ENCODE measurements at regions of chr7 and their contacts with region 1.

Region 1: GRCh38 chr7:43647673-43648472 is 65.0 kb downstream of the STK17A start:
- DNase-seq: no peak
- H3K4me3 Mint-ChIP-seq: peak overlapping the region; percentile 66
- H3K27ac Mint-ChIP-seq: peak overlapping the region; percentile 98
- H3K4me1 Mint-ChIP-seq: peaks cover 85% of the 10 kb centered on the region
- H3K27me3 Mint-ChIP-seq: no peaks in the 10 kb centered on the region

Region 2: DNA sequence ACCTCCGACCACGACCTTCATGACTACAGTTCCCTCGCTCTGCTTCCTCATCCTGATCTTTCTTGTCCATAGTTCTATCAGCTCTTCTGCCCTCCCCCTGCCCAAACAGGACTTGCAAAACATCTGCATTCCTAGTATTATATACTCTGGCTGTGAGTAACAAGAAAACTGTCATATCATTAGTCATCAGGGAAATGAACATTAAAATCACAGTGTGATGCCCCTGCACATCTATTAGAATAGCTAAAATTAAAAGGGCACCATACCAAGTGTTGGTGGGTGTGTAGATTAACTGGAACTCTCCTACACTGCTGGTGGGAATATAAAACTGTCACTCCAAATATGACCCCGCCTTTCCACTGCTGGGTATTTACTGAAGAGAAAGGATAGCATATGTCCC is 877.8 kb before region 1 on chr7:
- intact Hi-C with region 1: no loop called
- DNase-seq: no peak
- H3K4me3 Mint-ChIP-seq: no peak overlapping the region
- H3K27ac Mint-ChIP-seq: no peak overlapping the region
- H3K4me1 Mint-ChIP-seq: no peaks in the 10 kb centered on the region
- H3K27me3 Mint-ChIP-seq: no peaks in the 10 kb centered on the region

Region 3: GRCh38 chr7:42931834-42932651 is 715.8 kb before region 1 on chr7 and contains the starts of genes MRPL32 and PSMA2:
- intact Hi-C with region 1: loop called (anchors 10 kb)
- DNase-seq: peak; percentile 94
- H3K4me3 Mint-ChIP-seq: peak within 1 kb of the TSS; percentile 100
- H3K27ac Mint-ChIP-seq: peak within 1 kb of the TSS; percentile 99
- H3K4me1 Mint-ChIP-seq: peaks cover 53% of the 10 kb centered on the region
- H3K27me3 Mint-ChIP-seq: no peaks in the 10 kb centered on the region
- total RNA-seq, gene MRPL32: 68.8 and 70.0 TPM in 2 replicates
- total RNA-seq, gene PSMA2: 204 and 218 TPM in 2 replicates

Region 4: GRCh38 chr7:43533801-43534479 is 113.9 kb before region 1 on chr7:
- intact Hi-C with region 1: no loop called
- DNase-seq: no peak
- H3K4me3 Mint-ChIP-seq: no peak overlapping the region
- H3K27ac Mint-ChIP-seq: no peak overlapping the region
- H3K4me1 Mint-ChIP-seq: no peaks in the 10 kb centered on the region
- H3K27me3 Mint-ChIP-seq: peaks cover 15% of the 10 kb centered on the region

Region 5: DNA sequence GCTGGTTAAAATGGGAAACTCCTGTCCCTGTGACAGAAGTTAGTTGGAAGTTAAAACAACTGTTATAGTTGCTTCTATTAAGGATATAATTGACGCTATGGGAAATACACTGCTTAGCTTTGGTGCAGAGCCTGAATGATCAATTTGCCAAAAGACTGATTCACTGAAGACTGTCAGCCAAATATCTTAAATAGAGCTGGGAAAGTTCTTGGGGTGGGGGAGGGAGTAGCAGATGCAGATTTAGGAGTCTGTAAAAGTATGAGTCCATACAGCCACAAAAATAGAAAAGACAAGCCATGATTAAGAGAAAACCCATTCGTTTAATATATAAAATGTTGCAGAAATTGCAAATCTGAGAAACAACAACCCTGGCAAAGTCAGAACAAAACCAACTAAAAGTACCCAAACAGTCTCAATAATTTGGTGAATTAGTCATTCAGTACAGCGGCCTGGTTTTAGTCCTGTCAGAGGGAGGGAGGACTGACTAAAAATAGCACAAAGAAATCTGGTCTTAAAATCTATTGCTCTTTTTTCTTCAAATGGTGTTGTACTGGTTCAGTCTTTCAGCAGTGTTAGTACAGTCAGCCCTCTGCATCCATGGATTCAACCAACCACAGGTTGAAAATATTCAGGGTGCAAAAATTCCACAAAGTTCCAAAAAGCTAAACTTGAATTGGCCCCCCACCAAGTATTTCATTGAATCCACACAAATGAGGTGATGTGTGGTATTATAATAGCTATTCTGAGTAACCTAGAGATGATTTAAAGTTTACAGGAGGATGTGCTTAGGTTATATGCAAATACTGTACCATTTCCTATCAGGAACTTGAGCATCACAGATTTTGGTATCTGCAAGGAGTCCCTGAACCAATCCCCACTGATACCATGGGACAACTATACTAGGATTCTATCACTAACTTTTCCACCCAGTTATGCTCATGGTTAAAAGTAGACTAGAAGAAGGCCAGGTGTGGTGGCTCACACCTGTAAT is 35.0 kb before region 1 on chr7:
- intact Hi-C with region 1: loop called (anchors 1 kb)
- DNase-seq: no peak
- H3K4me3 Mint-ChIP-seq: peak overlapping the region; percentile 1
- H3K27ac Mint-ChIP-seq: peak overlapping the region; percentile 70
- H3K4me1 Mint-ChIP-seq: peaks cover 31% of the 10 kb centered on the region
- H3K27me3 Mint-ChIP-seq: no peaks in the 10 kb centered on the region

Region 6: GRCh38 chr7:43636093-43636492 is 11.8 kb before region 1 on chr7:
- intact Hi-C with region 1: no loop called
- DNase-seq: no peak
- H3K4me3 Mint-ChIP-seq: no peak overlapping the region
- H3K27ac Mint-ChIP-seq: no peak overlapping the region
- H3K4me1 Mint-ChIP-seq: peaks cover 44% of the 10 kb centered on the region
- H3K27me3 Mint-ChIP-seq: no peaks in the 10 kb centered on the region

Region 7: DNA sequence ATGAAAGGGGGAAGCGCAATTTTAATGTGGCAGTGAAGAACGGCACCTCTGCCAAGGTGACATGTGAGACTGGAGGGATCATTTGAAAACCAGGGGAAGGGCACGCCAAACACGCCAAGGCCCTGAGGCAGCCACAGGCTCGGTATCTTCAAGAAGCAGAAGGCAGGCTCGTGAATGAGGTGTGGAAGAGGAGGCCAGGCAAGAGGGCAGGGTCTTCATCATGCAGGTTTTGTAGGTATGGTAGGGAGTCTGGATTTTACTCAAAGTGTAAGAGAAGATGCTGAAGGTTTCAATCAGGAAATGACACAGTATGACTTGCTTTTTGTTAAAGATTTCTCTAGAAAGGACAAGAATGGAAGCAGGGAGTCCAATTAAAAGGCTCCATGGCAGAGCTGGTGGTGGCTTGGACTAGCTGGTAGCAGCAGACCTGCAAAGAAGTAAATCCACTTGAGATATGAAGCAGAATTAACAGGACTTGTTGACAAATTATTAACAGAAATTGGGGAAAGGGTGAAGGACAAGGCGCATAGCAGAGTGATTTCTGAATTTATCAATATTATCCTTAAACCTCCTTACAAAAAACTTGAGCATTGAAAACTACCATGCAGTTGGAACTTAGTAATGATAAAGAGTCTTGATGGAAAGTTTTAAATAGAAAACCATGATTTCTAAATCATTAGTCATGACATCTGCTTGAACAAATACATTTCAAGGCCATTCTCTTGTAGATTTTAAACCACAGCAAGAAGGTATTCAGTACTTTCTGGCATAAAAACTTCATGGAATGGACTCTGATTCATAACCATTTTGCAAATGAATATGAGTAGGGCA is 11.1 kb after region 1 on chr7:
- intact Hi-C with region 1: loop called (anchors 1 kb)
- DNase-seq: no peak
- H3K4me3 Mint-ChIP-seq: peak overlapping the region; percentile 40
- H3K27ac Mint-ChIP-seq: peak overlapping the region; percentile 92
- H3K4me1 Mint-ChIP-seq: peaks cover 46% of the 10 kb centered on the region
- H3K27me3 Mint-ChIP-seq: no peaks in the 10 kb centered on the region

Region 8: DNA sequence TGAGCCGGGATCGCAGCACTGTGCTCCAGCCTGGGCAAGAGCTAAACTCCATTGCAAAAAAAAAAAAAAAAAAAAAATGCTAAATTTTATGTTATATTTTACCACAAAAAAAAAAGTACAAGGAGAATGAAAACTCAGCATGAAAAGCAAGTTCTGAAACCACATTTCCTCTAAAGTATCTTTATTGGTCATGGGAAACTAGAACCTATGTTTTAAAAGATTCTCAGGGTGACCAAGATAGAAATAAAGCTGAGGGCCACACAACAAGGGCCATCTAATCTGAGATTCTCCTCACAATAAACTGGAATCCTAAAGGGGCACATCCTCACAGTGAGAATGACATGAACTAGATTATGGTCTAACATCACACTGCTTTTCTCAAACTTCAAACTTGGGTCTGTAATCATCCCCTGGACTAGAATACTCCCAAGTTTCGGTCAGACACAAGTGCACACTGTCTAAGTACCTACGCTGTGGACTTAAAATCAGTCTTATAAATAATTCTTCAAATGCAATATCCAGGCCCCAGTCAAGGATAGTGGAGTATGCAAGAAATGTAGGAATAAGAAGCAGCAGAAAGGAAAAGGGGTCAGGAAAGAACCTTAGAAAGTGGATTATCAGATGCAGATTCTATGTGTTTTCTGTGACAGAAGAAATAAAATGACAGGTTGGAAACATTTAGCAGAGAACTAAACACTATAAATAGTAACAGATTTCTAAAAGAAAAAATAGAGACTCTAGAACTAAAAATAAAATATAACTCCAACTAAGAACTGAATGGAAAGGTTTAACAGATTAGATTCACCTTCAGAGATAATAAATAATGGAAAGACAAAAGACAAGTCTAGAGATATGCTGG is 31.6 kb after region 1 on chr7:
- intact Hi-C with region 1: loop called (anchors 1 kb)
- DNase-seq: no peak
- H3K4me3 Mint-ChIP-seq: no peak overlapping the region
- H3K27ac Mint-ChIP-seq: no peak overlapping the region
- H3K4me1 Mint-ChIP-seq: peaks cover 39% of the 10 kb centered on the region
- H3K27me3 Mint-ChIP-seq: no peaks in the 10 kb centered on the region

Region 9: DNA sequence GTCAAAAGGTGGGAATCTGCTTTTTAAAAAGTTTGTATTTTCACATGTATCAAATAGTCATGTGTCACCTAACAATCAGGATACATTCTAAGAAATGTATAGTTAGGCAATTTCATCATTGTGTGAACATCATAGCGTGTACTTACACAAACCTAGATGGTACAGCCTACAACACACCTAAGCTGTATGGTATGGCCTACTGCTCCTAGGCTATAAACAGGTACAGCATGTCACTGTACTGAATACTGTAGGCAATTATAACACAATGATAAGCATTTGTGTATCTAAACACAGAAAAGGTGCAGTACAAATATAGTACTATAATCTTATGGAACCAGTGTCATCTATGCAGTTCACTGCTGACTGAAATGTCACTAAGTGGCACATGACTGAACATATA is 63.6 kb after region 1 on chr7:
- intact Hi-C with region 1: no loop called
- DNase-seq: no peak
- H3K4me3 Mint-ChIP-seq: no peak overlapping the region
- H3K27ac Mint-ChIP-seq: no peak overlapping the region
- H3K4me1 Mint-ChIP-seq: peaks cover 7% of the 10 kb centered on the region
- H3K27me3 Mint-ChIP-seq: no peaks in the 10 kb centered on the region

Region 10: DNA sequence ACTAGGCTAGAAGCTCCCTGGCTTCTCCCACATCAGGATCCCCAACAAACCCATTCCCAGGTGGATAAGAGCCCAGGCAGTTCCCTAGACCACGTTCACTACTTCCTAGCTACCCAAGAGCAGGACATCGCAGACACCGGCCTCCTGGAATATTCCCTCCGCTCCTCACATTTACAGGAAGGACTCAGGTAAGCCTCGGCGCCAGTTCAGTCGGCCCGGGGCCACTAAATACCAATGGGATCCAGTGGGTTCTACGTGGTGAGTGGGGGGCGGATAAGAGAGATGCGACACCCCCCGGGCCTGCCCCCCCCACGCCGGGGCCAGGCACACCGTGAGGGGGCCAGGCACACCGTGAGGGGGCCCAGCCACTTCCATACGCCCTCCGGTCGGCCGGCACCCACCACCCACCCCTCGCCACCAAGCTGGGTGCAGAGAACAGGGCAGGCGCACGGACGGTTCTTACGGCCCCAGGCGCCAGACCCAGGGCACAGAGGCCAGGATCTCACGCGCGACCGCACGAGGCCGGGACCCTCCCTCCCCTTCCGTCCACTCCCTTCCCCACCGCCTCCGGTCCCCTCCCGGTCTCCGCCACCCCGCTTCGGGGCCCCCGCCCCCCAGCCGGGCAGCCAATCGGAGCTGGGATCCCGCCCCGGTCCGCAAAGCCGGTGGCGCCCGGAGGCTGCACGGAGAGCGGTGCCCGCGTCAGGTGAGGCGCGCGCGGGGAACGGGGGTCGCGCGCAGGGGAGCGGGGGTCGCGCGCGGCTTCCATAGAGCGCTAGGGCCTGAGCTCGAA is 110.4 kb after region 1 on chr7 and contains the start of gene BLVRA:
- intact Hi-C with region 1: loop called (anchors 2 kb)
- DNase-seq: peak; percentile 60
- H3K4me3 Mint-ChIP-seq: peak within 1 kb of the TSS; percentile 73
- H3K27ac Mint-ChIP-seq: no peak within 1 kb of the TSS
- H3K4me1 Mint-ChIP-seq: peaks cover 39% of the 10 kb centered on the region
- H3K27me3 Mint-ChIP-seq: peaks cover 25% of the 10 kb centered on the region
- total RNA-seq, gene BLVRA: 30.9 and 32.2 TPM in 2 replicates